GM23248 (cell line): ENCODE measurements at regions of chr1 and their contacts with region 1.

Region 1: DNA sequence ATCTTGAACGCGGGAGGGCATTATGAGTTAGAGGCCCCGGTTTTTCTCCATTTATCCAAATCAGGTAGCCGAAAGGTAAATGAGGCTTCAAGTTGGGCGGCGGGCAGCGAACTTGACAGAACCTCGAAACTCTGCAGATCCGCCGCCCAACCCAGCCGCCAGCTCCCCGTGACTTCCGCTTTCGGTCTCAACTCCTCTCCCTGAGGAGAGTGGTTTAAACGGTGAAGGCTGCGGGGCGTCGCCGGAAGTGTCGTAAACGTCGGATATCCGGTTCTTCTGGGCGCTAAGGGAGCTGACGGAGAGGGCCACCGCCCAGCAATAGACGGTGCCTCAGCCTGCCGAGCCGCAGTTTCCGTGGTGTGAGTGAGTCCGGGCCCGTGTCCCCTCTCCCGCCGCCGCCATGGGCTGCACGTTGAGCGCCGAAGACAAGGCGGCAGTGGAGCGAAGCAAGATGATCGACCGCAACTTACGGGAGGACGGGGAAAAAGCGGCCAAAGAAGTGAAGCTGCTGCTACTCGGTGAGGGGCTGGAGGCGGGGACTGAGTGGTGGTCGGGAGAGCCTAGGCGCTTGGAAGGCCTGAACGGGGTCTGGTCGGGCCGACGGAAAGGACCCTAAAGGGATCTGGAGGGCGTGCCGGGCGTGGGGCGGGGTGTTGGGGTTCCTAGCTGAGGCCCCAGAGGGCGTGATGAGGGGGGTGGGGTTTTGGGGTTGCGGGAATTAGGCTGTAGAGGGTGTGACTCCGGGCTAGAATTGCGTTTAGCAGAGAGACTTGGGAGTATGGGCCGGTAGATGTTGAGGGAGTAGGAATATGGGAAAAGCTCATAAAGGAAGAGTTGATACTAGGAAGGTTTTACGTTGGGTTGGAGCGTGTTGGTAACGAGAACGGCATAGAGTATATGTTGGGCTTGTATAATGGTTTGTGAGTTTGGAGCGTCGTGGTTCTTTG is at the start of gene GNAI3:
- DNase-seq: peak; percentile 97
- H3K4me3 ChIP-seq: peak within 1 kb of the TSS; percentile 99
- H3K27ac ChIP-seq: peak within 1 kb of the TSS; percentile 93
- H3K4me1 ChIP-seq: peaks cover 29% of the 10 kb centered on the region
- H3K27me3 ChIP-seq: no peaks in the 10 kb centered on the region
- total RNA-seq, gene GNAI3: 14.7 and 14.9 TPM in 2 replicates

Region 2: GRCh38 chr1:109624201-109625010 is 75.8 kb after region 1 on chr1:
- in situ Hi-C with region 1: loop called (anchors 5 kb)
- DNase-seq: no peak
- H3K4me3 ChIP-seq: 0 out of 2 replicates have a peak overlapping the region, but pooled peaks have one; percentile 31
- H3K27ac ChIP-seq: no peak overlapping the region; the same call in 1 of the 2 replicates
- H3K4me1 ChIP-seq: peaks cover 31% of the 10 kb centered on the region
- H3K27me3 ChIP-seq: no peaks in the 10 kb centered on the region

Region 3: GRCh38 chr1:109722908-109723691 is 174.5 kb after region 1 on chr1:
- in situ Hi-C with region 1: loop called (anchors 10 kb)
- DNase-seq: peak; percentile 21
- H3K4me3 ChIP-seq: no peak overlapping the region
- H3K27ac ChIP-seq: no peak overlapping the region
- H3K4me1 ChIP-seq: peaks cover 23% of the 10 kb centered on the region
- H3K27me3 ChIP-seq: no peaks in the 10 kb centered on the region

Region 4: GRCh38 chr1:109773146-109773899 is 224.7 kb after region 1 on chr1:
- in situ Hi-C with region 1: loop called (anchors 5 kb)
- DNase-seq: peak; percentile 96
- H3K4me3 ChIP-seq: no peak overlapping the region
- H3K27ac ChIP-seq: no peak overlapping the region
- H3K4me1 ChIP-seq: 0 out of 2 replicates have a peak, but pooled peaks cover 9% of the 10 kb centered on the region
- H3K27me3 ChIP-seq: no peaks in the 10 kb centered on the region

Region 5: DNA sequence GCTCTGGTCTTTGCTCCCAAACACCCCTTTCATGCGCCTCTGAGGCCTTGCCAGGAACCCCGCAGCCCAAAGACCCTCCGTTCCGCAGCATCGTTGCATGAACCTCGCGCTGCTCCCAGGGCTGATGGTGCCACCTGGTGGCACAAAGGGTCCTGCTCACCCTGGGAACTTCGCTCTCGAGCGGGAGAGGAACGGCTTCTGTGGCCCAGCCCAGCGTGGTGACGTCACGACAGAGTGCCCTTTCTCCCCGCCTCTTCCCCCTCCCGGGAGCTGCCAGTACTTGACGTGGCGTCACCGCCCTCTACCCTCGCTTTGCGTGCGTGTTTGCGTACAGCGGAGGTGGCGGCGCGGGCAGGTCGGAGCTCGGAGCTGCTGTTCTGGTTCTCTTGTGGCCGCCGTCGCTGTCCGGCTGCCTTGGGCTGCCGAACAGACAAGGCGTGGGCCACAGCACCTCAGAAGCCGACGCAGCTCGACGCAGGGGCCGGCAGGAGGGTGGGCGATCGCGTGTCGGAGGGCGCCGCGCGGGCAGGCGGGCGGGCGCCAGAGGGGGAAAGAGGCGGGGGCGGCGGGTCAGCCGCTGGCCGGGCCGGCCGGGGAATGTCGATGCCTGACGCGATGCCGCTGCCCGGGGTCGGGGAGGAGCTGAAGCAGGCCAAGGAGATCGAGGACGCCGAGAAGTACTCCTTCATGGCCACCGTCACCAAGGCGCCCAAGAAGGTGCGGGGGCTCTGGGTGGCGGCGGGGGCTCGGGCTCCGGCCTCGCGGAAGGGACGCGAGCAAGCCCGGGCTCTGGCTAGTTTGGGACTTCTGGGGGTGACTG is 436.1 kb after region 1 on chr1 and contains the start of gene AHCYL1:
- in situ Hi-C with region 1: loop called (anchors 10 kb)
- DNase-seq: peak; percentile 100
- H3K4me3 ChIP-seq: peak within 1 kb of the TSS; percentile 99
- H3K27ac ChIP-seq: peak within 1 kb of the TSS; percentile 97
- H3K4me1 ChIP-seq: peaks cover 44% of the 10 kb centered on the region
- H3K27me3 ChIP-seq: no peaks in the 10 kb centered on the region
- total RNA-seq, gene AHCYL1: 47.6 and 49.3 TPM in 2 replicates

Region 6: GRCh38 chr1:110136911-110137310 is 588.3 kb after region 1 on chr1:
- in situ Hi-C with region 1: no loop called
- DNase-seq: no peak
- H3K4me3 ChIP-seq: no peak overlapping the region
- H3K27ac ChIP-seq: no peak overlapping the region
- H3K4me1 ChIP-seq: peaks cover 9% of the 10 kb centered on the region
- H3K27me3 ChIP-seq: peaks cover 51% of the 10 kb centered on the region